ENCODE measurements at regions of chr11 and their contacts with region 1.

Region 1: GRCh38 chr11:1674173-1675131 is 22.5 kb upstream of the KRTAP5-6 start:
- DNase-seq: no peak
- H3K4me3 ChIP-seq: no peak overlapping the region
- H3K27ac ChIP-seq: no peak overlapping the region
- H3K4me1 ChIP-seq: no peaks in the 10 kb centered on the region; a peak in 1 of 7 replicates
- H3K27me3 ChIP-seq: peaks cover 0 to 4% (median 0%) of the 10 kb centered on the region in 4 experiments; a peak in 3 of 7 replicates
- CTCF ChIP-seq: no peak
- EP300 ChIP-seq: no peak
- POLR2A ChIP-seq: no peak
- RAD21 ChIP-seq: no peak

Region 2: DNA sequence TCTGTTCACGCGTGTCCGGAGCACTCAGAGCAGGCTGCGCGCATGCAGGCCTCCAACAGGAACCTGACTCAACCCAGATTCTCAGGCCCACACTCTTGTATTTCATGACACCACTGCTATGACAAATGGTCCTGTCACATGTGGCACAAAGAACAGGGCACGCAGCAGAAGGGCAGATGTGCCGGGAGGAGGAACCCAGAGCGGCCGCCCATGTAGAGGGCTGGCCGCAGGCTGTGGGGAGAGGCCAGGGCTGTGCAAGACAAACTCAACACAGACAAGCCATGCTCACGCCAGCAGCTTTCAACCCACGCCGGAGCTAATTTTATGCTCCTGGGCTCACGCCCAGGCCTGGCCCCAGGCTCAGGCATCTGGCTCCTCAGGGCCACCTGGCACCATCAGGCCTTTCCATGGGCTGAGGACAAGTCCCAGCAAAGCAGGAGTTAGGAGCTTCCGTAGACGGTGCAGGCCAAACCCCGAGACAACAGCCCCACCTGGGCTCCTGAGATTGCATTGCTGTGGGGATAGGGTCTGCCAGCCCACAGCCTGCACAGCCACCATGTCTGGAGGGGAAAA is 142.4 kb before region 1 on chr11:
- CTCF ChIA-PET with region 1: no interaction called
- POLR2A ChIA-PET with region 1: no interaction called
- DNase-seq: no peak
- H3K4me3 ChIP-seq: no peak overlapping the region
- H3K27ac ChIP-seq: no peak overlapping the region
- H3K4me1 ChIP-seq: peaks cover 0 to 2% (median 0%) of the 10 kb centered on the region in 4 experiments; a peak in 1 of 7 replicates
- H3K27me3 ChIP-seq: no peaks in the 10 kb centered on the region
- CTCF ChIP-seq: no peak
- EP300 ChIP-seq: no peak
- POLR2A ChIP-seq: no peak
- RAD21 ChIP-seq: no peak

Region 3: DNA sequence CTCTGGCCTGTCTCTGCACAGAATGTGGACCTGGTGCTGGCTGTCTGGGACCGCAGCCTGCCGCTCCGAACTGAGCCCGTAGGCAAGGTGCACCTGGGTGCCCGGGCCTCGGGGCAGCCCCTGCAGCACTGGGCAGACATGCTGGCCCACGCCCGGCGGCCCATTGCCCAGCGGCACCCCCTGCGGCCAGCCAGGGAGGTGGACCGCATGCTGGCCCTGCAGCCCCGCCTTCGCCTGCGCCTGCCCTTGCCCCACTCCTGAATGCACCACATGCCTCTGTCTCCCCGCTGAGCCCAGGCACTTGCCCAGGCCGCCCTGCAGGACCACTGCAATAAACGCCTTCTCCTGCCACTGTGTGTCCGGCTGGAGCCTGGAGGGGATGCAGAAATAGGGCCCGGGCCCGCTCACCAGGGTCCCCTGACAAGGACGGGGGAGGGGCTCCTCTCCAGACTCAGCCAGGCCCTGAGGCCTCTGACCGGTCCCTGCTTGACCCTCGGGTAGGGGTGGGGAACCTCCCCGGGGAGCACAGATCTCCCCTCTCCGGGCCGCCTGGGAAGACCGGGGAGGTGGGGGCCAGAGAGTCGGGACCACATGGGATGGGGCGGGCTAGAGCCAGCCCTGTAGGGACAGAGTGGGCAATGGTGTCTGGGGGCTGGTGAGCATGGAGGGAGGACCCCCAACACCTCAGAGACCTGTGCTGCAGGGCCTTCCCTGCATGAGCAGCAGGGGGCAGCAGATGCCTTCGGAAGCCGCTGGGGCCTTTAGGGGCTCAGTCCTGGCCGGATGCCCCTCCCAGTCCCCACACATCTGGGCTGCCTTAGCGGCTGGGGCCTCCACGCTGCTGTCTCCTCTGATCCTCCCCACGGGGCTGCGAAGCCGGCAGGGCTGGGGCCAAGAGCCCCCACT is 163.0 kb after region 1 on chr11:
- CTCF ChIA-PET with region 1: interaction called, 21 read pairs
- POLR2A ChIA-PET with region 1: no interaction called
- DNase-seq: peak; percentile 50 to 90
- H3K4me3 ChIP-seq: no peak overlapping the region
- H3K27ac ChIP-seq: no peak overlapping the region
- H3K4me1 ChIP-seq: peaks cover 0 to 4% (median 2%) of the 10 kb centered on the region in 4 experiments; a peak in 4 of 7 replicates
- H3K27me3 ChIP-seq: no peaks in the 10 kb centered on the region; a peak in 2 of 7 replicates
- CTCF ChIP-seq: peak; percentile 91 to 94 (median 94)
- EP300 ChIP-seq: no peak
- POLR2A ChIP-seq: no peak
- RAD21 ChIP-seq: peak; percentile 92 to 93